ENCODE measurements at regions of chr4 and their contacts with region 1.

Region 1: GRCh38 chr4:25159884-25160713 is at the start of gene SEPSECS:
- DNase-seq: peak; percentile 96 to 97
- ATAC-seq: peak; percentile 97
- H3K4me3 ChIP-seq: peak within 1 kb of the TSS; percentile 78 to 98 (median 82)
- H3K27ac ChIP-seq: peak within 1 kb of the TSS; percentile 91 to 96 (median 93)
- H3K4me1 ChIP-seq: peaks cover 22 to 23% of the 10 kb centered on the region in 2 donors
- H3K27me3 ChIP-seq: no peaks in the 10 kb centered on the region
- CTCF ChIP-seq: no peak
- POLR2A ChIP-seq: peak in 1 of 2 donors; percentile 59
- total RNA-seq, gene SEPSECS: 3.9 to 6.7 (median 4.7) TPM

Region 2: GRCh38 chr4:25172961-25173915 is 13.1 kb after region 1 on chr4:
- in situ Hi-C with region 1: no loop called
- intact Hi-C with region 1: loop called (anchors 1 kb)
- DNase-seq: peak; percentile 69 to 76
- ATAC-seq: peak; percentile 100
- H3K4me3 ChIP-seq: peak overlapping the region in 1 of 4 donors; percentile 0
- H3K27ac ChIP-seq: peak overlapping the region; percentile 25 to 66 (median 62)
- H3K4me1 ChIP-seq: peaks cover 15 to 16% of the 10 kb centered on the region in 2 donors
- H3K27me3 ChIP-seq: no peaks in the 10 kb centered on the region
- CTCF ChIP-seq: no peak
- POLR2A ChIP-seq: no peak

Region 3: GRCh38 chr4:25312496-25313200 is 152.5 kb after region 1 on chr4 and contains the start of gene ZCCHC4:
- in situ Hi-C with region 1: loop called in 2 of 4 experiments (anchors 10 to 25 kb)
- intact Hi-C with region 1: loop called (anchors 1 kb)
- DNase-seq: peak; percentile 68 to 84
- ATAC-seq: peak; percentile 96 to 99
- H3K4me3 ChIP-seq: peak within 1 kb of the TSS; percentile 70 to 84 (median 74)
- H3K27ac ChIP-seq: peak within 1 kb of the TSS; percentile 64 to 78 (median 73)
- H3K4me1 ChIP-seq: peaks cover 5 to 8% of the 10 kb centered on the region in 2 donors
- H3K27me3 ChIP-seq: no peaks in the 10 kb centered on the region
- CTCF ChIP-seq: peak; percentile 72 to 99 (median 93)
- POLR2A ChIP-seq: no peak
- total RNA-seq, gene ZCCHC4: 6.9 to 14.2 (median 12.4) TPM

Measured in gastrocnemius medialis (tissue), 4 donors.